ENCODE measurements at regions of chr22 and their contacts with region 1.

Region 1: DNA sequence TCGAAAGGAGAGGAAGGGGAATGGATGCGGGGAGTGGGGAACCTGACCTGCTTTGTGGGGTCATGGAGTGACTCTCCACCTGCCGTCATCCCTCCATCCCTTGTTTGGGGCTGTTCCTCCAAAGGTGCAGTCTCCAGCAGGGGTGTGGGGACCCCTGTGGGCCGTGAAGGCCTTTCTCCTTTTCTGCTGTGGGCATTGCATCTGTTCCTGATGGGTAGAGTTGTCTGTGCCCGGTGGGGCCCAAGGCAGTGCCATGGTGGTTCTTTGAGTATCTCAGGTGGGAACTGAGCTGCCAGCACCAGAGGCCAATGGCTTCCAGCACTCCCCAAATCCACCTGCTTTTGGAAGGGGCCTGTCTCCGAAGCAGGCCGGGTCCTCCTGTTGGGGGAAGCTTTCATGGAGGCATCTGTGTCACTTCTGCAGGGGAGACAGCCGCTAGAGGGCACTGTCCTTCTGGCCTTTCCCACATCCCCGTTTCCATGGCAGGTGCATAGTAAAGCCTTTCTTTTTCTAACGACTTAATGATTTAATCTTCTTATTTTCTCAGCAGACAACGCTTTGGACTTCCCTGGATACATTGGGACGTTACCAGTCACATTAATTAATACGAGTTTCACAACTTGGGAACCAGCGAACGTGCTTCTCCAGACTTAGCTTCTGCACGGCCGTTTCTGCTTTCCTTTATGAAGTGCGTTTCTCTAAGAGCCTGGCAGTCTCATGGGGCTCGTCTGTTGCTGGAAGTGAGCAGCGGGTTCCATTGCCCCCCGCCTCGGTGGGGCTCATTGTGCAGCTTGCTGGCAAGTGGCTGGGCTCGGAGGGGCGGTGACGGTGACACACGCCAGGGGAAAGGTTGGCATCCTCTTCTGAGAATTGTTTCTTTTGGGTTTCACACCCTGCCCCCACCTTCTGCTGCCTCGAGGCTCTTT is 57.1 kb downstream of the PARVB start:
- DNase-seq: peak; percentile 88
- H3K4me3 ChIP-seq: no peak overlapping the region
- H3K27ac ChIP-seq: no peak overlapping the region
- H3K4me1 ChIP-seq: no peaks in the 10 kb centered on the region; a peak in 1 of 4 replicates
- H3K27me3 ChIP-seq: no peaks in the 10 kb centered on the region
- CTCF ChIP-seq: peak; percentile 91
- EP300 ChIP-seq: no peak
- RAD21 ChIP-seq: peak; percentile 85

Region 2: GRCh38 chr22:43060183-43060582 is 1021.0 kb before region 1 on chr22:
- CTCF ChIA-PET with region 1: no interaction called
- POLR2A ChIA-PET with region 1: no interaction called
- DNase-seq: peak; percentile 60
- H3K4me3 ChIP-seq: peak overlapping the region in 1 of 2 experiments; percentile 47; a peak in 1 of 4 replicates
- H3K27ac ChIP-seq: no peak overlapping the region
- H3K4me1 ChIP-seq: no peaks in the 10 kb centered on the region
- H3K27me3 ChIP-seq: no peaks in the 10 kb centered on the region
- CTCF ChIP-seq: peak; percentile 52
- EP300 ChIP-seq: no peak
- RAD21 ChIP-seq: peak; percentile 39

Region 3: GRCh38 chr22:43980996-43981395 is 100.2 kb before region 1 on chr22:
- CTCF ChIA-PET with region 1: no interaction called
- POLR2A ChIA-PET with region 1: no interaction called
- DNase-seq: no peak
- H3K4me3 ChIP-seq: no peak overlapping the region
- H3K27ac ChIP-seq: no peak overlapping the region
- H3K4me1 ChIP-seq: no peaks in the 10 kb centered on the region
- H3K27me3 ChIP-seq: no peaks in the 10 kb centered on the region
- CTCF ChIP-seq: no peak
- EP300 ChIP-seq: no peak
- RAD21 ChIP-seq: no peak

Region 4: DNA sequence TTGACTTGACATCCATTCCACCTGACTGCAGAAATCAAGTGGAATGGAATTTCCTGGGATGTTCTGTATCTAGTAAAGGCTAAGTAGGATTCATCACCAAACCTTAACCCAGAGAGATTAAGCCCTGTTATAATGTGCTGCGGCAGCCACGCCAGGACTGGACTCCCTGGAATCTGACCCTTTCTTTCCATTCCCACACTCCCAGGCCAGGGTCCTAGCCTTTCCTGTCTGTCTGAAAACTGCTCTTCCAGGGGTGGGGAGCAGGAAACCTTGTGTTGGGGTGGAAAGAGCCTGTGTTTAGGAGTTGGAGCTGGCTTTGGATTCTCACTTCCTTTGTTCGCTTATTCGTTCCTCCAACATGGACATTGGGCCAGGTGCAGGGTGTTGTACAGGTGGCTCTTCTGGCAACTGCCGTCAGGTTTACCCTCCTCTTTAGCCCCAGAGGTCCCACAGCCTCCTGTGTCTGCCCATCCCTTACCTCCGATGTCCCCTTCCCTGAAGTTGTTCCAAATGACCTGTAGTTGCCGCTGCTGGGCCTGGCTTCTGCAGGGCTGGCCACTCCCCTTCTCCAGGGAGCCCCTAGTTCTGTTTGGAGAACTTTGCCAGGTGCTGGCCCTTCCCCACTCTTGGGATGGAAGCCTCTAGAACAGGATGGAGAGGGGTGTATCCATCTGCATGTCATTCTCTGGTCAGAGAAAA is 77.6 kb before region 1 on chr22:
- CTCF ChIA-PET with region 1: interaction called, 13 read pairs
- POLR2A ChIA-PET with region 1: no interaction called
- DNase-seq: no peak
- H3K4me3 ChIP-seq: no peak overlapping the region
- H3K27ac ChIP-seq: no peak overlapping the region
- H3K4me1 ChIP-seq: no peaks in the 10 kb centered on the region
- H3K27me3 ChIP-seq: no peaks in the 10 kb centered on the region
- CTCF ChIP-seq: no peak
- EP300 ChIP-seq: no peak
- RAD21 ChIP-seq: no peak

Region 5: DNA sequence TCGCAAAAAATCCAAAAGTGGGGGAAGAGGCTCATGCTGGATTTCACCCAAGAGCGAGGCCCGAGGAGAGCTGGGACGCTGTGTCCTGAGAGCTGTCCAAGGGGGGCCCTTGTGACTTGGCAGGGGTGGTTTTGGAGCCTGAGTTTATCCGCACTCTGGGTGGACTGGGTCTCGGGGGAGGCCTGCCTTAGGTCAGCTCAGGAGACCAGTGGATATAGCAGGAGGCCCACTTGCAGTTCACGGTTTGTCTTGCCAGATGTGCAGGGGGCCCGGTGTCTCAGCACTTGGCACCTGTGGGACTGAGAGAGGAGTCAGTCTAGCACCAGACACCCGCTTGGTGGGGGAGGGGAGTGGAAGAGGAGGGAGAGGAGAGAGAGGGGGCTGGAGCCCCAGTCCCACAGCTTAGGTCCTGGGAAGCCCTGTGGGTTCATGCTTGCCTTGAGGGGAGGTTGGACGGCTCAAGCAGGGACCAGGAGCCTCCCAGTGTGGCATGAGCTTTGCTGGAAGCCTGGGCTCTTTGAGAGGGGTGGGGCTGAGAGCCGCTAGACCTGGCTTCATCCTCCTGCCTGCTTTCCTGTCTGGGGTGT is 23.7 kb before region 1 on chr22:
- CTCF ChIA-PET with region 1: interaction called, 113 read pairs
- POLR2A ChIA-PET with region 1: no interaction called
- DNase-seq: no peak
- H3K4me3 ChIP-seq: no peak overlapping the region
- H3K27ac ChIP-seq: no peak overlapping the region
- H3K4me1 ChIP-seq: peaks cover 0 to 6% of the 10 kb centered on the region in 2 experiments; a peak in 1 of 4 replicates
- H3K27me3 ChIP-seq: no peaks in the 10 kb centered on the region
- CTCF ChIP-seq: no peak
- EP300 ChIP-seq: no peak
- RAD21 ChIP-seq: no peak

Region 6: GRCh38 chr22:44107340-44107739 is 26.1 kb after region 1 on chr22:
- CTCF ChIA-PET with region 1: interaction called, 18 read pairs
- POLR2A ChIA-PET with region 1: no interaction called
- DNase-seq: no peak
- H3K4me3 ChIP-seq: no peak overlapping the region
- H3K27ac ChIP-seq: no peak overlapping the region
- H3K4me1 ChIP-seq: peaks cover 0 to 12% of the 10 kb centered on the region in 2 experiments; a peak in 1 of 4 replicates
- H3K27me3 ChIP-seq: no peaks in the 10 kb centered on the region
- CTCF ChIP-seq: no peak
- EP300 ChIP-seq: no peak
- RAD21 ChIP-seq: no peak

Region 7: GRCh38 chr22:44215287-44215686 is 134.1 kb after region 1 on chr22:
- CTCF ChIA-PET with region 1: no interaction called
- POLR2A ChIA-PET with region 1: no interaction called
- DNase-seq: no peak
- H3K4me3 ChIP-seq: no peak overlapping the region
- H3K27ac ChIP-seq: no peak overlapping the region
- H3K4me1 ChIP-seq: no peaks in the 10 kb centered on the region; a peak in 1 of 4 replicates
- H3K27me3 ChIP-seq: no peaks in the 10 kb centered on the region; the same call in 1 of the 2 replicates
- CTCF ChIP-seq: no peak
- EP300 ChIP-seq: no peak
- RAD21 ChIP-seq: no peak

Region 8: DNA sequence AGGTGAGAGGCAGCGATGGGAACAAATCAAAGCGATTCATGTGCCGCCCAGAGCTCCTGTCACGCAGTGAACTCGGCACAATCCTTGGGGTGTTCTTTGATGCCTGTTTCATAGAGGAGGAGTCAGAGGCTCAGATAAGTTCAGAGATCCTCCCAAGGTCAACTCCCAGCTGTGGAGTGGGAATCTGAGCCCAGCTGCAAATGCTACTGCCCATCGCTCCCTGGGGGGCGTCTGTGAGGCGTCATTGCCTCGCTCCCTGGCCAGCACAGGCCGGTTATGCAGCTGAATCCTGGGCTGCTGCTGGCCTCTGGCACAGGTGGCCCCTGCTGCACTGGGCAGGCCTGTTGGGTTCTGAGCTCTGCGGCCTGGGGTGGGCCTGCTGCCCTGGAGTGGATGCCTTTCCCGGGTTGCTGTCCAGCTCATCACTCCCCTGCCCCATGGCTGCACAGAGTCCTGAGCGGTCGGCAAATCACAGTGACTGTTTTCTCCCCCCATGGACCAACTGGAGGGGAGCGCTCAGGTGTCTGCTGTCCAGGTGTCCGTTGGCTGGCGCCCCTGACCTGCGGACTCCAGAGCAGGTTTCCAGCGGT is 267.9 kb after region 1 on chr22:
- CTCF ChIA-PET with region 1: interaction called, 11 read pairs
- POLR2A ChIA-PET with region 1: no interaction called
- DNase-seq: peak; percentile 66
- H3K4me3 ChIP-seq: no peak overlapping the region
- H3K27ac ChIP-seq: no peak overlapping the region
- H3K4me1 ChIP-seq: peaks cover 3 to 25% of the 10 kb centered on the region in 2 experiments; a peak in 1 of 4 replicates
- H3K27me3 ChIP-seq: no peaks in the 10 kb centered on the region
- CTCF ChIP-seq: no peak
- EP300 ChIP-seq: no peak
- RAD21 ChIP-seq: peak; percentile 41

Measured in SK-N-SH (cell line).